Testis (tissue), 5 donors: ENCODE measurements at regions of chr10 and their contacts with region 1.

Region 1: GRCh38 chr10:34637418-34637911 is 177.6 kb downstream of the PARD3 start:
- DNase-seq: peak; percentile 78
- H3K4me3 ChIP-seq: no peak overlapping the region
- H3K27ac ChIP-seq: no peak overlapping the region
- H3K4me1 ChIP-seq: peaks cover 5% of the 10 kb centered on the region
- H3K27me3 ChIP-seq: no peaks in the 10 kb centered on the region
- CTCF ChIP-seq: peak; percentile 74 to 98 (median 88)
- POLR2A ChIP-seq: no peak

Region 2: DNA sequence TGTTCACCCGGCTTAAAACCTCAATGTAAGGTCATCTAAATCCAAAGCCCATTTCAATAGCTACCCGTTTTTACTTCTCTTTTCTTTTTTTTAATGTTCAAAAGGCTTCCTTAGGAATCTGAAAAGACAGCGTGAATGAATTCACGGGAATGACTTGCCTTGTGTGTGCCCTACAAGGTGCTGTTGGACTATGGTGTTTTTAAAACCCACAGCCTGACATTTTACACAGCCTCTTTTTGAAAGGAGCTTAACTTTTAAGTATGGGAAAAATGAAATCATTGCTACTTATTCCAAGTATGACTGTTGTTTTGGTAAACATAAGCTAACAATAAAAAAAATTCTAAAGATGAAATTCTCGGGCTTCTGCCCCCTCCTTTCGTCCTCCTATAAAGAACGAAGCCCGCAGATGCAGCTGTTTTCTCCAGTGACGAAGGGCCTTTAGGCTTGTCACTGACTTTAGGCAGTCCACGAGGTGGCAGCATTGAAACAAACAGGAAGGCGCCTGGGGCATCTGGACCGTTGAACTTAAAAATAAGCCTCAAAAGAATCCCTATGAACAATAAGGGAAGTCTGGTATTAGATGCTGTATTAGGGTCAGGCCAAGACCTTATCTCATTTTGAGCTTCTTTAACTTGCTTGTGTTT is 1444.3 kb before region 1 on chr10:
- intact Hi-C with region 1: loop called (anchors 10 kb)
- DNase-seq: peak; percentile 92
- H3K4me3 ChIP-seq: no peak overlapping the region
- H3K27ac ChIP-seq: peak overlapping the region in 1 of 2 donors; percentile 14
- H3K4me1 ChIP-seq: no peaks in the 10 kb centered on the region
- H3K27me3 ChIP-seq: no peaks in the 10 kb centered on the region
- CTCF ChIP-seq: peak; percentile 60 to 79 (median 65)
- POLR2A ChIP-seq: no peak

Region 3: GRCh38 chr10:33330543-33331378 is 1306.7 kb before region 1 on chr10:
- intact Hi-C with region 1: loop called (anchors 10 kb)
- DNase-seq: peak; percentile 91
- H3K4me3 ChIP-seq: peak overlapping the region in 1 of 2 donors; percentile 19
- H3K27ac ChIP-seq: peak overlapping the region; percentile 6 to 81
- H3K4me1 ChIP-seq: no peaks in the 10 kb centered on the region
- H3K27me3 ChIP-seq: no peaks in the 10 kb centered on the region
- CTCF ChIP-seq: peak; percentile 76 to 88 (median 83)
- POLR2A ChIP-seq: no peak